Breast epithelium (tissue), 4 donors: ENCODE measurements at regions of chr5 and their contacts with region 1.

Region 1: GRCh38 chr5:32531885-32532520 is 53.4 kb upstream of the SUB1 start:
- DNase-seq: no peak
- H3K4me3 ChIP-seq: peak overlapping the region in 1 of 3 donors; percentile 2
- H3K27ac ChIP-seq: no peak overlapping the region
- H3K4me1 ChIP-seq: no peaks in the 10 kb centered on the region
- H3K27me3 ChIP-seq: no peaks in the 10 kb centered on the region
- CTCF ChIP-seq: no peak
- POLR2A ChIP-seq: no peak

Region 2: DNA sequence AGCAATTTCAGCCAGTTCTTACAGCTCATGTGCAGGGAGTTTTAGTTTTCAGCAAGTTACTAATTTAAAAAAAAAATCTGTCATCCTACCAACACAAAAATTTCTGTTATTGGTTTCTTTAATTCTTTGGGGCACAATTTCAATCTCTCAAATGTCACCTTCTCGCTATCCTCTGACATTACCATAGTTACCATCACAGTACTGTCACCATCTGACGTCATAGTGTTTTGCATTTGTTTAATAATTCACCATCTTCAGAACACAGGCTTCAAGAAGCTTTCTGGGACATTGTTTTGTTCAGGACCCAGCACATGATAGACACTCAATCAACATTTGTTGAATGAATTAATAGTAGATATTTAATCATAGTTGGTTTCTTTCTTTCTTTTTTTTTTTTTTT is 738.0 kb before region 1 on chr5:
- intact Hi-C with region 1: loop called (anchors 10 kb)
- DNase-seq: no peak
- H3K4me3 ChIP-seq: no peak overlapping the region
- H3K27ac ChIP-seq: no peak overlapping the region
- H3K4me1 ChIP-seq: no peaks in the 10 kb centered on the region
- H3K27me3 ChIP-seq: no peaks in the 10 kb centered on the region
- CTCF ChIP-seq: no peak
- POLR2A ChIP-seq: no peak

Region 3: GRCh38 chr5:32475334-32476097 is 56.5 kb before region 1 on chr5:
- intact Hi-C with region 1: no loop called
- DNase-seq: no peak
- H3K4me3 ChIP-seq: no peak overlapping the region
- H3K27ac ChIP-seq: no peak overlapping the region
- H3K4me1 ChIP-seq: no peaks in the 10 kb centered on the region
- H3K27me3 ChIP-seq: no peaks in the 10 kb centered on the region
- CTCF ChIP-seq: no peak
- POLR2A ChIP-seq: no peak